ENCODE measurements at regions of chr17 and their contacts with region 1.

Region 1: GRCh38 chr17:41738077-41738735 is 3.8 kb upstream of the HAP1 start:
- DNase-seq: peak; percentile 91
- ATAC-seq: peak; percentile 90

Region 2: GRCh38 chr17:41688699-41689496 is 49.3 kb before region 1 on chr17 and contains the start of gene EIF1:
- intact Hi-C with region 1: no loop called
- DNase-seq: peak; percentile 100
- ATAC-seq: peak; percentile 91
- total RNA-seq, gene EIF1: 1,166 TPM

Region 3: DNA sequence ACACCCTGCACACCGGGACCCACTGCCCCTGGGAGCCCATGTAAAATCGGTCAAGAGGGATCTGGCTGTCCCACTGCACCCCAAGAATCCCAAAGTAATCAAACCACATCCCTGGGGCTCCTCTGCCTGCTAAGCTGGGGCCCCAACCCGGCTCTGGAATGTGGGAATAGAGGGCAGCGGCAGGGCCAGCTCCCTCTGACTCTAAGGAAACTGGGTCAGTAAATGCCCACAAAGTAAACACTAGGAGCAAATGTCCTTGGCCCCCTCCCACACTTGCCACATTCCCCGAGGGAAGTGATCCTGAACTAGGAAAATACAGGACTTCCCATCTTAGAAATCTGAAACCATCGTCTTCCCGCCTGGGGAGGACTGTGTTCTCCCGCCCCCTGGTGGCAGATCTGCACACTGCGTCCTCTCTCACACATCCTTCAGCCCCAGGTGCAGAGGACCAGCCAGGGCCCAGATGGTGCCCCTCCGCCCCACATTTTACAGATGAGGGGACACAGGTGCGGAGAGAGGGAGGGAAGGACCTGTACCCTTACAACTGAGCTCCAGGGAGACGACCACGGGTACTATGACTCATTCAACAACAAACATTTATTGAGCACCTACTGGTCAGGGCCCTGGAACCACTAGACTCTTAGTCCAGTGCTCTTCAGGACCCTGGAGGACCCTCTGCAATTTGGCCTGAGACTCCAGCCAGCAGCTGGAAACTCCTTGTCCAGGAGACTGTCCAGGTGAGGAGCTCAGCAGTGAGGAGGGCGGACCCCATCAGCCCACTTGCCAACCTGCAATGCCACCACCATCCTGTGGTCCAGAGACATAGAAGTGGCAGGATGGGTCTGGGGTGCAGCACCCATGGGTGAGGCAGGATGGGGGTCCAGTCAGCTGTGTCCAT is 63.4 kb after region 1 on chr17:
- intact Hi-C with region 1: loop called (anchors 1 kb)
- DNase-seq: peak; percentile 88
- ATAC-seq: peak; percentile 87

Region 4: GRCh38 chr17:41885733-41886132 is 147.5 kb after region 1 on chr17:
- intact Hi-C with region 1: loop called (anchors 5 kb)
- DNase-seq: no peak
- ATAC-seq: no peak